ENCODE measurements at regions of chr14 and their contacts with region 1.

Region 1: GRCh38 chr14:58244556-58245387 is at the start of gene PSMA3:
- DNase-seq: peak; percentile 98
- H3K4me3 ChIP-seq: peak within 1 kb of the TSS; percentile 98 to 100
- H3K4me3 Mint-ChIP-seq: peak within 1 kb of the TSS; percentile 96 to 99 (median 98)
- H3K27ac ChIP-seq: peak within 1 kb of the TSS; percentile 96
- H3K27ac Mint-ChIP-seq: peak within 1 kb of the TSS; percentile 98 to 99 (median 99)
- H3K4me1 ChIP-seq: peaks cover 40% of the 10 kb centered on the region
- H3K4me1 Mint-ChIP-seq: peaks cover 35 to 57% (median 48%) of the 10 kb centered on the region in 4 donors
- H3K27me3 ChIP-seq: no peaks in the 10 kb centered on the region
- H3K27me3 Mint-ChIP-seq: peaks cover 0 to 1% of the 10 kb centered on the region in 2 donors
- total RNA-seq, gene PSMA3: 133 to 138 TPM

Region 2: DNA sequence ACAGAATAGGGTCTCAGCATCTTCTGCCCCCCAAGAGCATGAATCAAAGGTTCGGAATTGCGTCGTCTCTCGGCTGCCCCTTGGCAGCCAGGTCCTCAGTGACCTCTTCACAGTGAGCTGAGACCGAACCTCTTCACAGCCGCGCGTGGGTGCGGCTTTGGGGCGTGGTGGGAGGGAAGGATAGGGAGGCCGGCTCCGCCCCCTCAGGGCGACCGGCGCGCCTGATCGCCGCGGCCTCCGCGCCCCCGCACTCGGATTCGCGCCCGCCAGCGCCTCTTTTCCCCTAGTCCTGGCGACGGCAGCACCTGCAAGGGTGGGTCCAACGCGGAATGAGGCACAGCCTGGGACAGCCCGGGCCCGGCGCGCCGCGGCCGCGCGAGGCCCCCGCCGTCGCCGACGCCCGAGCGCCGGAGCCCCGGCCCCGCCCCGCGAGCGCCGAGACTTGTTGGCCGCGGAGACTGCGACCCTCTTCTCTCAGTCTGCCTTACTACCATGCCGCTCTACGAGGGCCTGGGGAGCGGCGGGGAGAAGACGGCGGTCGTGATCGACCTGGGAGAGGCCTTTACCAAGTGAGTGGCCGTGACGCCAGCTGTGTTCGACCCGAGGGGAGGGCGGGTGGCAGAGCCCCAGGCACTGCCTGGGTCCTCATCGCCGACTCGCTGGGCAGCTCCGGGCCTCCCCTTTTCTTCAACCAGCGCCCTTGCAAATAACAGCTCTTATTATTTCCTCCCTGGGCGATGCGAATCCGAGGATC is 44.9 kb before region 1 on chr14 and contains the start of gene ACTR10:
- CTCF ChIA-PET with region 1: interaction called, 5 read pairs
- POLR2A ChIA-PET with region 1: interaction called, 23 read pairs
- intact Hi-C with region 1: loop called (anchors 1 kb)
- DNase-seq: peak; percentile 84 to 91 (median 87)
- H3K4me3 ChIP-seq: peak within 1 kb of the TSS; percentile 64 to 75
- H3K4me3 Mint-ChIP-seq: peak within 1 kb of the TSS; percentile 94 to 97 (median 96)
- H3K27ac ChIP-seq: peak within 1 kb of the TSS; percentile 78
- H3K27ac Mint-ChIP-seq: peak within 1 kb of the TSS; percentile 94 to 99 (median 98)
- H3K4me1 ChIP-seq: peaks cover 33% of the 10 kb centered on the region
- H3K4me1 Mint-ChIP-seq: peaks cover 22 to 48% (median 34%) of the 10 kb centered on the region in 4 donors
- H3K27me3 ChIP-seq: no peaks in the 10 kb centered on the region
- H3K27me3 Mint-ChIP-seq: no peaks in the 10 kb centered on the region
- total RNA-seq, gene ACTR10: 53.7 to 54.9 TPM

Region 3: GRCh38 chr14:58258156-58258555 is 13.4 kb after region 1 on chr14:
- CTCF ChIA-PET with region 1: interaction called, 3 read pairs
- POLR2A ChIA-PET with region 1: interaction called, 19 read pairs
- intact Hi-C with region 1: no loop called
- DNase-seq: no peak
- H3K4me3 ChIP-seq: no peak overlapping the region
- H3K4me3 Mint-ChIP-seq: no peak overlapping the region
- H3K27ac ChIP-seq: no peak overlapping the region
- H3K27ac Mint-ChIP-seq: peak overlapping the region in 4 of 7 donors; percentile 6 to 59 (median 32)
- H3K4me1 ChIP-seq: no peaks in the 10 kb centered on the region
- H3K4me1 Mint-ChIP-seq: peaks cover 9 to 20% (median 11%) of the 10 kb centered on the region in 4 donors
- H3K27me3 ChIP-seq: no peaks in the 10 kb centered on the region
- H3K27me3 Mint-ChIP-seq: no peaks in the 10 kb centered on the region

Region 4: DNA sequence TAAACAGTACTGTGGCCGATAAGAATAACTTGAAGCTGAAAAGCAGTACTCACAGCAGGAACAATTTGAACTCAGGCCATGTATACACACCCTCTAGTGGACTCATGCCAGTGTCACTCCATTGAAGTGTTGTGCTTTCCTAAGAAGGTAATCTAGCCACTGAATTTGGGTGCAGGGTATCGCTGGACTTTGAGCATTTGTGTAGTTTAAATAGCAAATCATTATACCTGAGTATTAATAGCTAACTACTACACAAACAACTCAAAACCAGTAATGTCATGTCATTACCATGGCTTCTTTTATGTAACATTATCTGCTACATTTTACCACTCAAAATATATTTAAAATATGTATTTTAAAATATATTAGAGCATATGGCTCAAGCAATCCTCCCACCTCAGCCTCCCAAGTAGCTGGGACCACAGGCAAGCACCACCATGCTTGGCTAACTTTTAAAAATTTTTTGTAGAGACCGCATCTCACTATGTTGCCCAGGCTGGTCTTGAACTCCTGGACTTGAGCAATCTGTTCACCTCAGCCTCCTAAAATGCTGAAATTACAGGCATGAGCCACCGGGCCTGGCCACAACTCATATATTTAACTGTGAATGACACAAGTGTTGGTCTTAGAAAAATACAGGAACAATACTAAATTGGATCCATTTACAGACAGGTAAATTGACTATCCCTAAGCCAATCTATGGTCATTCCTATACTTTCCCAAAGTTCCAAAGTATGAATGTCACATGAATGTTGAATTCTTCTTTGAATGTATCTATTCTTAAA is 28.0 kb after region 1 on chr14:
- CTCF ChIA-PET with region 1: no interaction called
- POLR2A ChIA-PET with region 1: interaction called, 10 read pairs
- intact Hi-C with region 1: no loop called
- DNase-seq: no peak
- H3K4me3 ChIP-seq: no peak overlapping the region
- H3K4me3 Mint-ChIP-seq: no peak overlapping the region
- H3K27ac ChIP-seq: no peak overlapping the region
- H3K27ac Mint-ChIP-seq: peak overlapping the region in 3 of 7 donors; percentile 12 to 36 (median 36)
- H3K4me1 ChIP-seq: peaks cover 45% of the 10 kb centered on the region
- H3K4me1 Mint-ChIP-seq: peaks cover 24 to 54% (median 30%) of the 10 kb centered on the region in 4 donors
- H3K27me3 ChIP-seq: no peaks in the 10 kb centered on the region
- H3K27me3 Mint-ChIP-seq: no peaks in the 10 kb centered on the region

Region 5: DNA sequence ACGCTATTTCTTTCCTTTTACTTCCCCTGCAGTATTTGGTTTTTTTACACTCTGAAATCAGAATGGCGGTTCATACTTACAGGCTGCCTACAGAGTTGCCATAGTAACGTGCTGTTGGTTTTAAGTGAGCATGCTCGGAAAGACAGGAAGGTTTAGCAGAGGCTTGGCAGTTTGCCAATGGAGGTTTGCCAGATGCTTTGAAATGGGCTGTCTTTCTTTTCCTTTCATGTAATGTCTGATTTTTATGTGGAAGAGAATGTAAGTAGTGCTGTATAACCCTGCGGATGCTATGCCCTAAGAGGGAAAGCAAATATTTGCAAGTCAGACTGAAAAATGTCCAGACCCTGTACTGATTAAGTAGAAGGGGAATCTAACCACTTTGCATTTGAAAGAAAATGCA is 86.3 kb after region 1 on chr14:
- CTCF ChIA-PET with region 1: no interaction called
- POLR2A ChIA-PET with region 1: interaction called, 3 read pairs
- intact Hi-C with region 1: loop called (anchors 1 kb)
- DNase-seq: peak; percentile 92 to 97 (median 96)
- H3K4me3 ChIP-seq: no peak overlapping the region
- H3K4me3 Mint-ChIP-seq: peak overlapping the region; percentile 49 to 78 (median 71)
- H3K27ac ChIP-seq: peak overlapping the region; percentile 55
- H3K27ac Mint-ChIP-seq: peak overlapping the region; percentile 85 to 97 (median 95)
- H3K4me1 ChIP-seq: peaks cover 21% of the 10 kb centered on the region
- H3K4me1 Mint-ChIP-seq: peaks cover 17 to 20% (median 17%) of the 10 kb centered on the region in 4 donors
- H3K27me3 ChIP-seq: no peaks in the 10 kb centered on the region
- H3K27me3 Mint-ChIP-seq: no peaks in the 10 kb centered on the region

Region 6: GRCh38 chr14:58376791-58377190 is 132.0 kb after region 1 on chr14:
- CTCF ChIA-PET with region 1: no interaction called
- POLR2A ChIA-PET with region 1: no interaction called
- intact Hi-C with region 1: no loop called
- DNase-seq: no peak
- H3K4me3 ChIP-seq: no peak overlapping the region
- H3K4me3 Mint-ChIP-seq: no peak overlapping the region
- H3K27ac ChIP-seq: no peak overlapping the region
- H3K27ac Mint-ChIP-seq: no peak overlapping the region
- H3K4me1 ChIP-seq: no peaks in the 10 kb centered on the region
- H3K4me1 Mint-ChIP-seq: peaks cover 0 to 5% (median 2%) of the 10 kb centered on the region in 4 donors
- H3K27me3 ChIP-seq: no peaks in the 10 kb centered on the region
- H3K27me3 Mint-ChIP-seq: no peaks in the 10 kb centered on the region